ENCODE measurements at regions of chr11 and their contacts with region 1.

Region 1: GRCh38 chr11:110296226-110297075 is at the start of gene RDX:
- DNase-seq: peak; percentile 82 to 89 (median 85)
- ATAC-seq: peak; percentile 79 to 95 (median 88)
- H3K4me3 ChIP-seq: peak within 1 kb of the TSS; percentile 68 to 99 (median 90)
- H3K27ac ChIP-seq: peak within 1 kb of the TSS; percentile 94 to 99 (median 97)
- H3K4me1 ChIP-seq: peaks cover 0 to 51% (median 33%) of the 10 kb centered on the region in 12 donors
- H3K27me3 ChIP-seq: no peaks in the 10 kb centered on the region
- CTCF ChIP-seq: peak in 4 of 12 donors; percentile 4 to 40 (median 24)
- POLR2A ChIP-seq: peak in 1 of 2 donors; percentile 54
- total RNA-seq, gene RDX: 96.8 to 148 (median 126) TPM

Region 2: GRCh38 chr11:110092515-110093404 is 203.7 kb before region 1 on chr11 and contains the start of gene ZC3H12C:
- intact Hi-C with region 1: loop called in 1 of 10 experiments (anchors 10 kb)
- DNase-seq: peak; percentile 80 to 88 (median 86)
- ATAC-seq: peak; percentile 72 to 87 (median 85)
- H3K4me3 ChIP-seq: peak within 1 kb of the TSS; percentile 59 to 93 (median 81)
- H3K27ac ChIP-seq: peak within 1 kb of the TSS; percentile 76 to 99 (median 94)
- H3K4me1 ChIP-seq: peaks cover 0 to 38% (median 20%) of the 10 kb centered on the region in 12 donors
- H3K27me3 ChIP-seq: no peaks in the 10 kb centered on the region
- CTCF ChIP-seq: peak in 10 of 12 donors; percentile 17 to 71 (median 48)
- POLR2A ChIP-seq: peak in 1 of 2 donors; percentile 19
- total RNA-seq, gene ZC3H12C: 13.8 to 24.3 (median 18.8) TPM

Region 3: DNA sequence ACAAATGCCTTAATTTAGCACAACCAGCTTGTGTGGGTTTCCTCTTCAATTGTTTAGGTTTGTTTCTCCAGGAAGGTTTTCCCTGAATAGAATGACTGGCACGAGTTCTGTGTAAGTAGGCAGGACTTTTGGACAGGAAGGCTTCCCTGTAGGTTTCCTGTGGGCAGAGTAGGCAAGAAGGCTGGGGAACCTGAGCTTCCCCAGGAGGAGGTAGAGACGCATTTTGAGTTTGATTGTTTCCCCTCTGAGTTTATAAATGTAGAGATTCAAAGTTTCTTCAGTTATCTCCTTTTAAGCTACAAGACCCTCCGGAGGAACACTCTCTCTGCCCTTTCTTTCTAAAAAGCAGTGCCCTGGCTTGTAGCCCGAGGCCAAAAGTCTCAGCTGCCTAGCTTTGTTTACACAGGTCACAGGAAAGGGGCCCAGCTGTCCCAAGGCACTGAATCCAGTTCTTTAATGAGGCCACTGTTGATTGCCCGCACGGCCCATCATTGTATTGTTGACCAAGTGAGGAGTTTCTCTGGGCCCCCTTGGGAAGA is 66.6 kb after region 1 on chr11:
- intact Hi-C with region 1: loop called in 7 of 10 experiments (anchors 5 to 10 kb)
- DNase-seq: peak in 3 of 5 donors; percentile 20 to 36 (median 30)
- ATAC-seq: peak in 3 of 4 donors; percentile 52 to 72 (median 68)
- H3K4me3 ChIP-seq: no peak overlapping the region
- H3K27ac ChIP-seq: peak overlapping the region in 11 of 12 donors; percentile 3 to 70 (median 41)
- H3K4me1 ChIP-seq: peaks cover 6 to 34% (median 14%) of the 10 kb centered on the region in 12 donors
- H3K27me3 ChIP-seq: no peaks in the 10 kb centered on the region
- CTCF ChIP-seq: no peak
- POLR2A ChIP-seq: no peak

Region 4: GRCh38 chr11:110376711-110377324 is 80.4 kb after region 1 on chr11:
- intact Hi-C with region 1: loop called in 1 of 10 experiments (anchors 5 kb)
- DNase-seq: peak in 4 of 5 donors; percentile 78 to 86 (median 81)
- ATAC-seq: peak; percentile 56 to 89 (median 84)
- H3K4me3 ChIP-seq: peak overlapping the region in 3 of 12 donors; percentile 18 to 34 (median 19)
- H3K27ac ChIP-seq: peak overlapping the region in 6 of 12 donors; percentile 19 to 61 (median 27)
- H3K4me1 ChIP-seq: peaks cover 0 to 44% (median 7%) of the 10 kb centered on the region in 12 donors
- H3K27me3 ChIP-seq: no peaks in the 10 kb centered on the region
- CTCF ChIP-seq: peak; percentile 66 to 90 (median 83)
- POLR2A ChIP-seq: no peak

Region 5: DNA sequence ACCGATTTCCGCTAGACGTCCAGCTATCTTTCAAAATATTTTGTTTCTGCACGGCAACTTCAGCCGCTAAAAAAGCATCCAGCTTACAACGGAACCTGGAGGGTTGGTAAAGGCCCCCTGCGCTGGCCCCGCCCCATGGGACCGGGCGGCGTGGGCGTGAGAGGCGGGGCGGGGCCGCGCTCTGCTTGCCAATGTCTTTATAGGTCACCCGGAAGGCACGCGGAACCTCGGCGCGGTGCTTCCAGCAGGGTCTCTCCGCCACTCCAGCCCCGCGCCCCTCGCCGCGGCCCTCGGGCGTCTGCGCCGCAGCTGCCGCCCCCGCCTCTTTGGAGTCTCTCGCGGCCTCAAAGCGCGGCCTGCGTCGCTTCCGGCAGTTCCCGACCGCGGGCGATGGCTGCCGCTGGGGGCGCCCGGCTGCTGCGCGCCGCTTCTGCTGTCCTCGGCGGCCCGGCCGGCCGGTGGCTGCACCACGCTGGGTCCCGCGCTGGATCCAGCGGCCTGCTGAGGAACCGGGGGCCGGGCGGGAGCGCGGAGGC is 133.3 kb after region 1 on chr11 and contains the start of gene FDX1:
- intact Hi-C with region 1: loop called in 3 of 10 experiments (anchors 10 kb)
- DNase-seq: peak; percentile 79 to 91 (median 90)
- ATAC-seq: peak; percentile 86 to 97 (median 95)
- H3K4me3 ChIP-seq: peak within 1 kb of the TSS; percentile 73 to 94 (median 84)
- H3K27ac ChIP-seq: peak within 1 kb of the TSS; percentile 74 to 97 (median 91)
- H3K4me1 ChIP-seq: peaks cover 0 to 39% (median 31%) of the 10 kb centered on the region in 12 donors
- H3K27me3 ChIP-seq: no peaks in the 10 kb centered on the region
- CTCF ChIP-seq: peak; percentile 32 to 89 (median 70)
- POLR2A ChIP-seq: peak in 1 of 2 donors; percentile 76
- total RNA-seq, gene FDX1: 15.2 to 28.5 (median 22.5) TPM

Region 6: DNA sequence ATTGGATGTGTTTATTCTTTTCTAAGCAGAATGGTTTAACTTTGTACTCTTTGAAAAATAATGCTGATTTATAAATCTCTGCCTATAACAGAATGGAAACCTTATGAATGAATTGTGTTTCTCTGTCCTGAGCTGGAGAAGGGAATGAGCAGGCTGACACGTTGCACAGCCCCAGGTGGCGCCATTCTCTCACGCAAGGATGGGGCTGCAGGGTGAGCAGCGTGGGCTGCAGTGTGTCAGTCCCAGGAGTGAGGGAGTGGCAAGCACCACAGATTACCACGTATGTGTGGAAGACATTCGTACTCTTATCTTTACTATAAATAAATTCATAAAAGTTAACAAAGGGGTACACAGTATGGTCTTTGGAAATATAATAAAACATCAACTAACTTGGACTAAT is 166.7 kb after region 1 on chr11:
- intact Hi-C with region 1: no loop called
- DNase-seq: peak in 2 of 5 donors; percentile 24 to 50
- ATAC-seq: peak in 3 of 4 donors; percentile 69 to 79 (median 72)
- H3K4me3 ChIP-seq: no peak overlapping the region
- H3K27ac ChIP-seq: no peak overlapping the region
- H3K4me1 ChIP-seq: no peaks in the 10 kb centered on the region
- H3K27me3 ChIP-seq: no peaks in the 10 kb centered on the region
- CTCF ChIP-seq: peak in 8 of 12 donors; percentile 24 to 54 (median 49)
- POLR2A ChIP-seq: no peak

Region 7: DNA sequence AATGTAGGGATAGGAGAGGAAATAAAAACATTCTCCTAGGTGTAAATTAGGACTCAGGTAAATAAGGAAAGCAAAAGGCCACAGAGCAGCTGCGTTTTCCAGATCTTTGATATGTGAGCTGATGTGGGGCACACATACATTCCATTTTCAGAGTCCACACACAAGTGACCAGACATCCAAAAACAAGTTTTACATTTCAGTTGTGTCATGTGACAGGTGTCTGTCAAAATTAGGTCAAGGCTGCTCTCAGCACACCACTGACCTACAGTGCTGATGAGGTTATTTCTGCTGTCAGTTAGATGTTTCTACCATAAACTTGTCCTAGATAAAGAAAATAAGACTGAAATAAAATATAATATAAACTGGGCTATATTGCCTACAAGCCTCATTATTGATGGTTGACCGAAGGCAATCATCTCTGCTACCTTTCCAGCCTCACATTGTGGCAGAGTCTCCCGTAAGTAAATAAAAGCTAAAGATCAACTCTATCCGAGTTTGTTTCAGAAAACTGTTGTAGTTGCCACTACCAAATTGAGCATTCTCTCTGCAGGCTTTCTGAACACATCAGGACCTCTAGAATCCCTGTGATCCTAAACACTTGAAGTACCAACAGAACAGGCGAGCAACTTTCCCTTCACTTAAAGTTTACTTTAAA is 407.9 kb after region 1 on chr11:
- intact Hi-C with region 1: no loop called
- DNase-seq: no peak
- ATAC-seq: no peak
- H3K4me3 ChIP-seq: no peak overlapping the region
- H3K27ac ChIP-seq: no peak overlapping the region
- H3K4me1 ChIP-seq: no peaks in the 10 kb centered on the region
- H3K27me3 ChIP-seq: peaks cover 0 to 11% (median 0%) of the 10 kb centered on the region in 9 donors
- CTCF ChIP-seq: no peak
- POLR2A ChIP-seq: no peak